Activated CD4-positive, alpha-beta memory T cell treated with anti-CD3 and anti-CD28 coated beads, Interleukin-2, amount 10 ng/mL, durations not matched to agents 7 days and 5 days (primary cell): ENCODE measurements at regions of chr13 and their contacts with region 1.

Region 1: GRCh38 chr13:99356158-99357091 is 49.2 kb upstream of the GPR183 start:
- DNase-seq: peak; percentile 67
- H3K4me3 Mint-ChIP-seq: peak overlapping the region; percentile 56
- H3K27ac Mint-ChIP-seq: peak overlapping the region; percentile 96
- H3K4me1 Mint-ChIP-seq: peaks cover 99% of the 10 kb centered on the region
- H3K27me3 Mint-ChIP-seq: no peaks in the 10 kb centered on the region

Region 2: DNA sequence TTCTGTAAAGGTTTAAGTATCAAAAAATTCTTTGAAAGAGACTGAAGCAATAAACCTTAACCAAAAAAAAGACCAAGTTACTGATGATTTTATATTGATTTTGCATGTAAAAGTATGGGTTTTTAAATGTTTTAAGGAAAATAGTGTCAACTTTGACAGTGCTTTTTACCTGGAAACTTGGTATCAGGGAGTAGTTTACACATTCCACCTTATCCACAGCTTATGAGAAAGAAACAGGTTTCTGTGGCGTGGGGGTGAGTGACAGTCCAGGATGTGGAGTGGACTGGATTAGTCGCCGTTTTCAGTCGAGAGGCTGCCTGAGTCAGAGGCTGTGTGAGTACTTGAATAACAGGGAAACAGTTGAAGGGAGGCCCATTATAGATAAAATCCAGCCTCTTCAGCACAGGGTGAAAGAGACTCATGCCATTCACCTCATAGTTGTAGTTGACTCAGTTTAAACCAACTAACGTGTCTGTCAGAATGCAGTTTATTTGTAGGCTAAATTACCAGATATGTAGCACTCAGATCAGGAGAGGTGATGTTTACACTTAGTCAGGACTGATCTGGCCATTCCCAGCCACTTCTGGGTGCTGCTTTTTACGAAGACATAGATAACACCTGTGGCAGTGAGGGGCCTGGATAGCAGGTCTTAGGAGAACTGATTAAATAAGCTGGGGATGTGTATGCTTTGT is 48.6 kb before region 1 on chr13:
- CTCF ChIA-PET with region 1: interaction called, 8 read pairs
- POLR2A ChIA-PET with region 1: interaction called, 349 read pairs
- DNase-seq: peak; percentile 78
- H3K4me3 Mint-ChIP-seq: peak overlapping the region; percentile 79
- H3K27ac Mint-ChIP-seq: peak overlapping the region; percentile 83
- H3K4me1 Mint-ChIP-seq: peaks cover 82% of the 10 kb centered on the region
- H3K27me3 Mint-ChIP-seq: no peaks in the 10 kb centered on the region

Region 3: GRCh38 chr13:99314640-99315176 is 41.7 kb before region 1 on chr13:
- CTCF ChIA-PET with region 1: interaction called, 6 read pairs
- POLR2A ChIA-PET with region 1: interaction called, 349 read pairs
- DNase-seq: peak; percentile 64
- H3K4me3 Mint-ChIP-seq: peak overlapping the region; percentile 68
- H3K27ac Mint-ChIP-seq: peak overlapping the region; percentile 89
- H3K4me1 Mint-ChIP-seq: peaks cover 76% of the 10 kb centered on the region
- H3K27me3 Mint-ChIP-seq: no peaks in the 10 kb centered on the region

Region 4: GRCh38 chr13:99335603-99336002 is 20.8 kb before region 1 on chr13:
- CTCF ChIA-PET with region 1: interaction called, 9 read pairs
- POLR2A ChIA-PET with region 1: interaction called, 23 read pairs
- DNase-seq: no peak
- H3K4me3 Mint-ChIP-seq: no peak overlapping the region
- H3K27ac Mint-ChIP-seq: no peak overlapping the region
- H3K4me1 Mint-ChIP-seq: peaks cover 45% of the 10 kb centered on the region
- H3K27me3 Mint-ChIP-seq: no peaks in the 10 kb centered on the region

Region 5: DNA sequence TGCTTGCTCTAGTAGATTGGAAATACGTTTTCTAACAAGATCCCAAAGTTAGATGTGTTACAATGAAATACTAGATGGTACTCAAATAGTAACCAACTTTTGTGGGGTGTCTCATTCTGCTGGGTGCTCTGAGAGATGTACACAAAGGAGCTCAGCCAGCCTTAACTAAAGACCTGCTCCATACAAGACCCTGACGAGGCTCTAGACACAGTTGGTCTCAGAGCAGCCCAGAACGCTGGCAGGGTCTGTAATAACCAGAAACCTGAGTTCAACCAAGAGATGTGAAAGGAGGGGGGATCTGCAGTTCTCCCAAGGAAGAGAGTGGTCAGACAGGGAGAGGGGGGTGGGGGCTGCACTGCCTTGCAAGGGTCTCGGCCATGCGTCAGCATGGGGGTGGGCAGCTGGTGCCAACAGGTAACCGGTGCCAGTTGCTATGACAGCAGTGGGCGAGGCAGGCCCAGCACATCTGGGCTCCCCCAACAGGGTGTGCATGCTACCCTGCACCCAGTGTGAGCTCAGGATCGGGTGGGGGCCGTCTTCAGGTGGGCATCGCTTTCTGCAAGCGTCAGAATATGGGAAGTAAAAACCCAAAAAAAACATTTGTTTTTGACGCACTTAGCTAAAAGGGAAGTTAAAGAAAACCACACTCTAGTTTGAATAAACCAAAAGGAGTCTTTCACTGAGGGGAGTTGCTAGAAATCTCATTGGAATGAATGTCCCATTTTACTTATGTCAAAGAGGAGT is 18.7 kb after region 1 on chr13:
- CTCF ChIA-PET with region 1: interaction called, 8 read pairs
- POLR2A ChIA-PET with region 1: interaction called, 19 read pairs
- DNase-seq: no peak
- H3K4me3 Mint-ChIP-seq: no peak overlapping the region
- H3K27ac Mint-ChIP-seq: peak overlapping the region; percentile 21
- H3K4me1 Mint-ChIP-seq: peaks cover 77% of the 10 kb centered on the region
- H3K27me3 Mint-ChIP-seq: no peaks in the 10 kb centered on the region